ENCODE measurements at regions of chr1 and their contacts with region 1.

Region 1: GRCh38 chr1:24481101-24481500 is 21.5 kb upstream of the RCAN3 start:
- DNase-seq: peak; percentile 46

Region 2: DNA sequence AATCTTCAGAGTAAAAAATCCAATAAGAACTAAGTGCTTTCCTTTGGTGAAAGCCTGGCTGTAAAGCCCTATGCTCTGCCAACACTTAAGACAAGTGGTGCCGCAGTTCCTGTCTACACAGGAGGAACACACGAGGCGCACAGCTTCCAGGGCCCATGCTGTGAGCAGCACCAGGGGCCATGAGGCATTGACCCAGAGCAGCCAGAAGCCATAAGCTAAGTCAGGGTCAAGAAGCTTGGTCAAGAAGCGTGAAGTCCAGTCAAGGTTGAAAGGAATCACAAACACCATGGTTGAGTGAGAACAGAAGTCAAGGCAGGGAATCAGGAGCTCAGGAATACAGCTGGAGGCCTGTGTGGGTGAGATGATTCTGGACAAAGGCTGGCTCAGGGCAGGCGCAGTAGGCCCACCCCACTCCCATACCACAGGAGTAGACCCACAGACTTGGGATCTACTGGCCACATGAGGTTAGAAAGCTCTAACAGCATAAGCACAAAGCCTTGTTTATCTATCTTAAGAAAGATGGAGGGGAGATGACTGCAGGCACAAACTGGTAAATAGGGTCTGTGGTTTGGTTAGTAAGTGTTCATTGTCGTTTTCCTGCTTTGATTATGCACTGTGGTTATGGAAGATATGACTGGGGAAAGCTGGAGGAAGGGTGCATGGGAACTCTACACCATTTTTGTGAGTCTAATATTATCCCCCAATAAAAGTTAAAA is 21.4 kb before region 1 on chr1:
- intact Hi-C with region 1: loop called in 1 of 2 experiments (anchors 2 kb)
- DNase-seq: no peak

Region 3: GRCh38 chr1:24694380-24694843 is 213.3 kb after region 1 on chr1:
- intact Hi-C with region 1: no loop called
- DNase-seq: no peak